A549 (cell line): ENCODE measurements at regions of chr11 and their contacts with region 1.

Region 1: GRCh38 chr11:114262681-114263512 is 33.3 kb upstream of the NNMT start:
- DNase-seq: peak; percentile 26 to 50
- ATAC-seq: peak; percentile 85 to 90; a peak in 5 of 6 replicates
- H3K4me3 ChIP-seq: no peak overlapping the region
- H3K27ac ChIP-seq: no peak overlapping the region
- H3K4me1 ChIP-seq: 0 out of 3 replicates have a peak, but pooled peaks cover 5% of the 10 kb centered on the region
- CTCF ChIP-seq: peak; percentile 55; the same call in 2 of the 3 replicates
- EP300 ChIP-seq: no peak
- POLR2A ChIP-seq: no peak
- RAD21 ChIP-seq: peak; percentile 70 to 76

Region 2: GRCh38 chr11:113896156-113896879 is 366.6 kb before region 1 on chr11:
- CTCF ChIA-PET with region 1: interaction called, 240 read pairs
- POLR2A ChIA-PET with region 1: interaction called, 4 read pairs
- DNase-seq: peak; percentile 15 to 22
- ATAC-seq: peak; percentile 88 to 91
- H3K4me3 ChIP-seq: no peak overlapping the region
- H3K27ac ChIP-seq: no peak overlapping the region
- H3K4me1 ChIP-seq: no peaks in the 10 kb centered on the region
- CTCF ChIP-seq: peak; percentile 66
- EP300 ChIP-seq: no peak
- POLR2A ChIP-seq: no peak
- RAD21 ChIP-seq: peak; percentile 60 to 64

Region 3: DNA sequence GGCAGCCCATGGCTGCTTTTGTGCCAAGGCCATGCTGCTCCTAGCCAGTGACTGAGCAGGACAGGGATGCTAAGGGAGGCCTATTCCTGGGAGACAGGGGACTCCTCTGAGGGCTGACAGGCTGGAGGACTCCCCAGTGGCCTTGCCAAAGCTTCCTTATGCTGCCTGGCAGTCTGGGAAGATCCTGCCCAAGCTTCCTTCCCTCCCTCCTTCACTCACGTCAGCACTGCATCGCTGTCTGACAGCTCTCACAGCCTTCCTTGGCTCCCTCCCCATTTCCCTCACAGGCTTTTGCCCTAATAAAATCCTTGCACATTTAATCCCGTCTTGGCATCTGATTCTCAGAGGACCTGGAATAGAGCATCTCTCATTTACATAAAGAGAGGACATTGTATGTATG is 261.5 kb before region 1 on chr11:
- CTCF ChIA-PET with region 1: interaction called, 315 read pairs
- POLR2A ChIA-PET with region 1: no interaction called
- DNase-seq: no peak
- ATAC-seq: no peak
- H3K4me3 ChIP-seq: no peak overlapping the region
- H3K27ac ChIP-seq: no peak overlapping the region
- H3K4me1 ChIP-seq: no peaks in the 10 kb centered on the region
- CTCF ChIP-seq: no peak
- EP300 ChIP-seq: no peak
- POLR2A ChIP-seq: no peak
- RAD21 ChIP-seq: no peak

Region 4: GRCh38 chr11:114036156-114036811 is 226.6 kb before region 1 on chr11:
- CTCF ChIA-PET with region 1: interaction called, 142 read pairs
- POLR2A ChIA-PET with region 1: no interaction called
- DNase-seq: peak; percentile 41 to 72
- ATAC-seq: peak; percentile 96 to 99
- H3K4me3 ChIP-seq: peak overlapping the region; percentile 46
- H3K27ac ChIP-seq: peak overlapping the region; percentile 64 to 66; a peak in 4 of 6 replicates
- H3K4me1 ChIP-seq: peaks cover 6% of the 10 kb centered on the region; the same call in 2 of the 3 replicates
- CTCF ChIP-seq: peak; percentile 70
- EP300 ChIP-seq: no peak
- POLR2A ChIP-seq: no peak
- RAD21 ChIP-seq: peak; percentile 64 to 75

Region 5: GRCh38 chr11:114066046-114066648 is 196.8 kb before region 1 on chr11:
- CTCF ChIA-PET with region 1: interaction called, 11 read pairs
- POLR2A ChIA-PET with region 1: no interaction called
- DNase-seq: no peak
- ATAC-seq: no peak
- H3K4me3 ChIP-seq: no peak overlapping the region
- H3K27ac ChIP-seq: no peak overlapping the region
- H3K4me1 ChIP-seq: no peaks in the 10 kb centered on the region
- CTCF ChIP-seq: no peak
- EP300 ChIP-seq: no peak
- POLR2A ChIP-seq: no peak
- RAD21 ChIP-seq: no peak

Region 6: DNA sequence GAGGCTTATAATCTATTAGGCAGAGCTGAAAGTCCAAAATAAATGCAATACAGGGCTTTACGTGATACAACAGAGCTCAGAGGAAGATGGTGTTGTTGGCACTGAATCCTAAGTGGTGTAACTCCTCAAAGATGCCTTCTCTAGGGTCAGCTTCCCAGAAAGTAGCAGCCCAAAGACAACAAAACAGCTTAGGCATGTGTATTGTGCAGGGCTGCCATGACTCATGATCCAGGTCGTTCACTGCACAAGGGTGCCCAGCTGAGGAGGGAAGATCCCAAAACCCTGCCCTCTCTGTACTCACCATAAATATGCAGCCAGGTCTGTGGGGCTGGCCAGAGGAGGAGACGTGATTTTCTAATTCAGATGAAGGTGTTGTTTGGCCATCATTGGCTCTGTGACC is 26.1 kb before region 1 on chr11:
- CTCF ChIA-PET with region 1: interaction called, 16 read pairs
- POLR2A ChIA-PET with region 1: no interaction called
- DNase-seq: no peak
- ATAC-seq: peak in 1 of 2 experiments; percentile 31; a peak in 1 of 6 replicates
- H3K4me3 ChIP-seq: no peak overlapping the region
- H3K27ac ChIP-seq: no peak overlapping the region
- H3K4me1 ChIP-seq: no peaks in the 10 kb centered on the region
- CTCF ChIP-seq: no peak
- EP300 ChIP-seq: no peak
- POLR2A ChIP-seq: no peak
- RAD21 ChIP-seq: no peak

Region 7: GRCh38 chr11:114273071-114273470 is 10.2 kb after region 1 on chr11:
- CTCF ChIA-PET with region 1: interaction called, 44 read pairs
- POLR2A ChIA-PET with region 1: no interaction called
- DNase-seq: no peak
- ATAC-seq: no peak
- H3K4me3 ChIP-seq: no peak overlapping the region
- H3K27ac ChIP-seq: no peak overlapping the region
- H3K4me1 ChIP-seq: no peaks in the 10 kb centered on the region
- CTCF ChIP-seq: no peak
- EP300 ChIP-seq: no peak
- POLR2A ChIP-seq: no peak
- RAD21 ChIP-seq: no peak

Region 8: GRCh38 chr11:114317787-114318137 is 54.9 kb after region 1 on chr11:
- CTCF ChIA-PET with region 1: no interaction called
- POLR2A ChIA-PET with region 1: no interaction called
- DNase-seq: peak in 1 of 2 experiments; percentile 70
- ATAC-seq: peak in 1 of 2 experiments; percentile 27; a peak in 3 of 6 replicates
- H3K4me3 ChIP-seq: no peak overlapping the region
- H3K27ac ChIP-seq: peak overlapping the region; percentile 87 to 92
- H3K4me1 ChIP-seq: peaks cover 95% of the 10 kb centered on the region
- CTCF ChIP-seq: peak; percentile 47
- EP300 ChIP-seq: no peak
- POLR2A ChIP-seq: no peak
- RAD21 ChIP-seq: peak; percentile 57 to 61

Region 9: GRCh38 chr11:114330373-114330772 is 67.5 kb after region 1 on chr11:
- CTCF ChIA-PET with region 1: no interaction called
- POLR2A ChIA-PET with region 1: no interaction called
- DNase-seq: no peak
- ATAC-seq: no peak
- H3K4me3 ChIP-seq: no peak overlapping the region
- H3K27ac ChIP-seq: no peak overlapping the region
- H3K4me1 ChIP-seq: no peaks in the 10 kb centered on the region
- CTCF ChIP-seq: no peak
- EP300 ChIP-seq: no peak
- POLR2A ChIP-seq: no peak
- RAD21 ChIP-seq: no peak

Region 10: DNA sequence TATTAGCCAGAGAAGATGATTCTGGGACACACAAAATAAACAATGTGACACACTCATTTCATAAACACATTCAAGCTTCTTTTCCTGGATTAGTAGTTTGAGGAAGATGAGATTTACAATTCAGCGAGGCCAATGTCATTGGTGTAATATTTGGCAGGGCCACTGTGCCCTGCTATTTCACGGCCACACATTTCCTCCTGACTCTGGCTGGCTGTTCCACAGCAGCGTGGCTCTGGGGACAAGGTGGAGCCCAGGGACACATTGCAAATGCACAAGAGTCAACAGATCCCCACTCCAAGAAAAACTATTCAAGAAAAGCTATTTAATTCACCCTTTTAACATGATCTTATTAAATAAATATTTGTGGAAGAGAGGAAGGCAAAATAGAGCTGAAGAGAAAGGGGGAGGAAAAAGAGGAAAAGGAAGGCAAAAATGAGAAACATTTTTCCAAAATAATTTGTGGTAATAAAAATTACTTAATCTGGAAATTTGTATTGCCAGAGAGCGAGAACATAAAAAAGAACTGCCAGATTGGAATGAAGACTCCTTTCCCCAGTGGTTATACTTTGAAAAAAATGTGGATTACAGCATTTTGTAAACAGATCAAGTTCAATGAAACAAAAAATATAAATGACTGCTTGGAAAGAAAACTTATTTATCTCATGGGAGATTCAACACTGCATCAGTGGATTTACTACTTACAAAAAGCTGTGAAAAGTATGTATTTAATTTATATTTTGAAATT is 442.6 kb after region 1 on chr11:
- CTCF ChIA-PET with region 1: no interaction called
- POLR2A ChIA-PET with region 1: no interaction called
- DNase-seq: no peak
- ATAC-seq: no peak
- H3K4me3 ChIP-seq: no peak overlapping the region
- H3K27ac ChIP-seq: no peak overlapping the region
- H3K4me1 ChIP-seq: no peaks in the 10 kb centered on the region
- CTCF ChIP-seq: no peak
- EP300 ChIP-seq: no peak
- POLR2A ChIP-seq: no peak
- RAD21 ChIP-seq: no peak